ENCODE measurements at regions of chr11 and their contacts with region 1.

Region 1: DNA sequence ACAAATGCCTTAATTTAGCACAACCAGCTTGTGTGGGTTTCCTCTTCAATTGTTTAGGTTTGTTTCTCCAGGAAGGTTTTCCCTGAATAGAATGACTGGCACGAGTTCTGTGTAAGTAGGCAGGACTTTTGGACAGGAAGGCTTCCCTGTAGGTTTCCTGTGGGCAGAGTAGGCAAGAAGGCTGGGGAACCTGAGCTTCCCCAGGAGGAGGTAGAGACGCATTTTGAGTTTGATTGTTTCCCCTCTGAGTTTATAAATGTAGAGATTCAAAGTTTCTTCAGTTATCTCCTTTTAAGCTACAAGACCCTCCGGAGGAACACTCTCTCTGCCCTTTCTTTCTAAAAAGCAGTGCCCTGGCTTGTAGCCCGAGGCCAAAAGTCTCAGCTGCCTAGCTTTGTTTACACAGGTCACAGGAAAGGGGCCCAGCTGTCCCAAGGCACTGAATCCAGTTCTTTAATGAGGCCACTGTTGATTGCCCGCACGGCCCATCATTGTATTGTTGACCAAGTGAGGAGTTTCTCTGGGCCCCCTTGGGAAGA is 66.6 kb upstream of the RDX start:
- DNase-seq: peak in 1 of 2 donors; percentile 20
- ATAC-seq: peak in 7 of 8 donors; percentile 46 to 79 (median 75)
- H3K4me3 ChIP-seq: no peak overlapping the region
- H3K27ac ChIP-seq: peak overlapping the region in 9 of 10 donors; percentile 29 to 72 (median 47)
- H3K4me1 ChIP-seq: peaks cover 0 to 44% (median 24%) of the 10 kb centered on the region in 9 donors
- H3K27me3 ChIP-seq: no peaks in the 10 kb centered on the region
- CTCF ChIP-seq: no peak

Region 2: DNA sequence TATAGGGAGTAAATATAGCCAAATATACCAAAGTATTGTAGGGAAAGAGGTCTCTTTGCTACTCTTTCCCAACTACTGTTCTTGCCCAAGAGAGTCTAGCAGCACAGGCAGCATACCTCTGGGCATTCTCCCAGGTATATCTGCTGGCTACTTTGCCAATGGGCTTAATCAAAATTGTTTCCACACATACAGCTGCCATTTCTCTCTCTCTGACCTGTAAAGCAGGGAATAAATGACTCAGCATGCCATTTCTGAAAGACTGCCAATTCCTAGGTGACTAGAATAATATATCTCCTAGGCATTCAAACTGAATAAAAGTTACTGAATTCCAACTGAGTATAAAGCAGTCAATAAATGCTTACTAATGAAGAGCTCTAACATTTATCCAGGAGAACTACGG is 111.2 kb before region 1 on chr11:
- intact Hi-C with region 1: no loop called
- DNase-seq: peak in 1 of 2 donors; percentile 43
- ATAC-seq: peak in 7 of 8 donors; percentile 49 to 97 (median 91)
- H3K4me3 ChIP-seq: no peak overlapping the region
- H3K27ac ChIP-seq: peak overlapping the region in 6 of 10 donors; percentile 11 to 67 (median 34)
- H3K4me1 ChIP-seq: peaks cover 0 to 33% (median 22%) of the 10 kb centered on the region in 9 donors
- H3K27me3 ChIP-seq: no peaks in the 10 kb centered on the region
- CTCF ChIP-seq: no peak

Region 3: GRCh38 chr11:110317516-110317932 is 45.5 kb before region 1 on chr11:
- intact Hi-C with region 1: loop called in 1 of 10 experiments (anchors 5 kb)
- DNase-seq: peak in 1 of 2 donors; percentile 60
- ATAC-seq: peak in 7 of 8 donors; percentile 65 to 90 (median 82)
- H3K4me3 ChIP-seq: no peak overlapping the region
- H3K27ac ChIP-seq: peak overlapping the region in 2 of 10 donors; percentile 18 to 22
- H3K4me1 ChIP-seq: peaks cover 0 to 41% (median 29%) of the 10 kb centered on the region in 9 donors
- H3K27me3 ChIP-seq: no peaks in the 10 kb centered on the region
- CTCF ChIP-seq: no peak